ENCODE measurements at regions of chr18 and their contacts with region 1.

Region 1: DNA sequence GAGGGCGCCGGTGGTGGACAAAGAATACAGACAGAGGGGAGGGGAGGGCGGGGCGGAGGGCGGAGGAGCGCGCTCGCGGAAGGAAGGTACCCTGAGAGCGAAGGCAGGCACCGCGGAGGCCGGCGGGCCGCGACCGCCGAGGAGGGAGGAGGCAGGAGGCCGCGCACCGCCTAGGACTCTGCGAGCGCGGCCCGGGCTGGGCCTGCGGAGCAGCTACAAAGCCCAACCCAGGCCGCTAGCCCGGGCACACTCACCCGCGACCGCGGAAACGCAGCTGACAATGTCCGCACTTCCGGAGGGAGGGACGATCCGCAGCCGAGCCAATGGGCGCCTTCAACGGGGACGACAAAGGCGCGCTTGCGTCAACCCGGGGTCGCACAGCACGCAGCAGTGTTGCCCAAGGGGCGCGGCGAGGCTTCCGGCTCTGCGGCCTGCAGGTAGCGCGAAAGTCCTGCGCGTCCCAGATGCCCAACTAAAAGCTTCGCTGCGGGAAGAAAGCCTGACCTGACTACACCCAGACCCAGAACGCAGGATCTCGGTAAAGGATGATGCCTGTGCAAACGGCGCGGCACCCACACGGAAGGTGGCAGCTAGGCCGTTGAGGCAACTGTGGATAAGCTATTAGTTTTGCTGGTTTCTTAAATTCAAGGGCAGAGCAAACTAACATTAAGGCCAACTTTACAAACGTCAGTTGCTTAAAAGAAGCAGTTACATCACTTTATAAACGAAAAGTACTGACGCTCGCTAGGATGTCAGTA is at the start of gene C18orf32:
- DNase-seq: peak; percentile 94
- ATAC-seq: peak; percentile 92
- H3K4me3 Mint-ChIP-seq: peak within 1 kb of the TSS; percentile 94
- H3K27ac Mint-ChIP-seq: peak within 1 kb of the TSS; percentile 98
- H3K4me1 Mint-ChIP-seq: peaks cover 68% of the 10 kb centered on the region
- H3K27me3 Mint-ChIP-seq: no peaks in the 10 kb centered on the region
- CTCF ChIP-seq: no peak
- total RNA-seq, gene C18orf32: 31.6 and 32.9 TPM in 2 replicates

Region 2: GRCh38 chr18:49321800-49322461 is 165.2 kb before region 1 on chr18:
- CTCF ChIA-PET with region 1: no interaction called
- POLR2A ChIA-PET with region 1: no interaction called
- intact Hi-C with region 1: no loop called
- DNase-seq: no peak
- ATAC-seq: no peak
- H3K4me3 Mint-ChIP-seq: no peak overlapping the region
- H3K27ac Mint-ChIP-seq: no peak overlapping the region
- H3K4me1 Mint-ChIP-seq: no peaks in the 10 kb centered on the region
- H3K27me3 Mint-ChIP-seq: no peaks in the 10 kb centered on the region
- CTCF ChIP-seq: no peak

Region 3: DNA sequence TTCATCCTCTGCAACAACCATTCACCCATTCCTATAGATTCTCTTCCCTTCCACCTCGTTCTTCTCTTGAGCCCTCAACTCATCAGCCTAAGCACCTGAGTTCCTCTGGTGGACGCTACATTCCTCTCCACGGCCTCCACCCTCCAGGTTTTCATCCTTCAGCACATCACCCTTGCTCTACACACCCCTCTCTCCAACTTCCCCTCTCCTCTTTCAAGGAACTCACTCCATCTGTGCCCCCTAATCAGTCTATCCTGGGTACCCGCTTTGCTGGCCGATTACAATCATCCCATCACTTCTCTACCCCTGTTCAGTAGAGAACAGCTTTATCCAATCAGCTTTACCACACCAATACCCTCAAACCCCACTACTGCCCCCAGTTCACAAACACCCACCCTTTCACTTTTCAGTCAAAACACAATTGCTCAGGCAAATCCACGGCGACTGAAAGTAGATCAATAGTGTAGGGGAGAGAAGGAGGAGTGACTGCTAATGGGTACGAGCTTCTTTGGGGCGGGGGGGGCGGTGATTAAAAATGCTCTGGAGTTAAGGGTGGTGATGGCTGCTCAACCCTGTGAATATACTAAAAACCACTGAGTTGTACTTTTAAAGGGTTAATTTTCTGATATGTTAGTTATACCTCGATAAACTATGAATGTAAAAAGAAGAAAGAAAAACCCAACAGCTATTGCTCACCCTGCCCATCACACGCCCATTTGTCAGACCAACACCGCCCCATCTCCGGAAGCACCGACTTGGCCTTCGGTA is 27.5 kb before region 1 on chr18:
- CTCF ChIA-PET with region 1: no interaction called
- POLR2A ChIA-PET with region 1: interaction called, 68 read pairs
- intact Hi-C with region 1: loop called (anchors 1 kb)
- DNase-seq: no peak
- ATAC-seq: peak; percentile 23
- H3K4me3 Mint-ChIP-seq: peak overlapping the region; percentile 88
- H3K27ac Mint-ChIP-seq: peak overlapping the region; percentile 77
- H3K4me1 Mint-ChIP-seq: peaks cover 45% of the 10 kb centered on the region
- H3K27me3 Mint-ChIP-seq: no peaks in the 10 kb centered on the region
- CTCF ChIP-seq: no peak

Region 4: GRCh38 chr18:49520661-49521145 is 33.6 kb after region 1 on chr18:
- CTCF ChIA-PET with region 1: no interaction called
- POLR2A ChIA-PET with region 1: no interaction called
- intact Hi-C with region 1: no loop called
- DNase-seq: no peak
- ATAC-seq: no peak
- H3K4me3 Mint-ChIP-seq: no peak overlapping the region
- H3K27ac Mint-ChIP-seq: no peak overlapping the region
- H3K4me1 Mint-ChIP-seq: no peaks in the 10 kb centered on the region
- H3K27me3 Mint-ChIP-seq: peaks cover 15% of the 10 kb centered on the region
- CTCF ChIP-seq: no peak

Region 5: DNA sequence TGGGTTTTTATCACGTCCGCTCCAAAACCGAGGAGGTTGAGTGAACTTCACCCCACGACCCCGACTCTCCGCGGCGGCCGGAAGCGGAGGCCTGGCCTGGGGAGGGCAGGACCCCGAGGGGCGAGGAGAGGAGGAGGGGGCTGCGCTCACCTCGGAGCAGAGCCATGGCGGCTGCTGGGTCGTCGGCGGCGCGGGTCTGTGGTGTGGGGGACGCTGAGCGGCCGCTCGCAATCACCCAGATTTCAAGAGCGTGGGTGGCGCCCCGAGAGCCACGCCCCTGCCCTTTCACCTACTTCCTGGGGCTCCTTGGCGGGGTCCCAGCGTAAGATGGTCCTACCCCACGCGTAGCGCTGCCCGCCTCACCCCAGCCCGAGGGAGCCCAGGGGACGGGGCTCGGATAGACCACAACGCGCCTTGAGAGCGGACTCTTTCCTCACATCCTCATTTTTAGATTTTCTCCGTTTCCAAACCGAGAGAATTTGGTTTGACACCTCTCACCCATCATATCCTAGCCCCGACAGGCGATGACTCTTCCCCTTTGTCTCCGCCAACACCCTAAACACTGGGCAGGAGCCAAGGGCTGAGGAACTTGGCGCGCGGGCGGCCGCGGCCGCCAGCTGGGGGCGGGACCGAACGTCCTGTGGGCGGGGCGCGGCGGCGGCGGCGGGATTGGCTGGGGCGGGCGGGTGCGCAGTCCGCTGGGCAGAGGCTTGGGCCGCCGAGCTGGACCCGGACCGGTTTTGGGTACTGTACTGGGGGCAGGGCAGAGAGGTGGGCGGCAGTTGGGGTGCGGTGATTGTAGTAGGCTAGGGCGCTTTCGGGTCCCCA is 326.4 kb after region 1 on chr18 and contains the start of gene ACAA2:
- CTCF ChIA-PET with region 1: no interaction called
- POLR2A ChIA-PET with region 1: interaction called, 4 read pairs
- intact Hi-C with region 1: loop called (anchors 1 kb)
- DNase-seq: peak; percentile 79
- ATAC-seq: peak; percentile 88
- H3K4me3 Mint-ChIP-seq: peak within 1 kb of the TSS; percentile 96
- H3K27ac Mint-ChIP-seq: peak within 1 kb of the TSS; percentile 95
- H3K4me1 Mint-ChIP-seq: peaks cover 24% of the 10 kb centered on the region
- H3K27me3 Mint-ChIP-seq: no peaks in the 10 kb centered on the region
- CTCF ChIP-seq: no peak
- total RNA-seq, gene ACAA2: 24.9 and 26.9 TPM in 2 replicates

Region 6: DNA sequence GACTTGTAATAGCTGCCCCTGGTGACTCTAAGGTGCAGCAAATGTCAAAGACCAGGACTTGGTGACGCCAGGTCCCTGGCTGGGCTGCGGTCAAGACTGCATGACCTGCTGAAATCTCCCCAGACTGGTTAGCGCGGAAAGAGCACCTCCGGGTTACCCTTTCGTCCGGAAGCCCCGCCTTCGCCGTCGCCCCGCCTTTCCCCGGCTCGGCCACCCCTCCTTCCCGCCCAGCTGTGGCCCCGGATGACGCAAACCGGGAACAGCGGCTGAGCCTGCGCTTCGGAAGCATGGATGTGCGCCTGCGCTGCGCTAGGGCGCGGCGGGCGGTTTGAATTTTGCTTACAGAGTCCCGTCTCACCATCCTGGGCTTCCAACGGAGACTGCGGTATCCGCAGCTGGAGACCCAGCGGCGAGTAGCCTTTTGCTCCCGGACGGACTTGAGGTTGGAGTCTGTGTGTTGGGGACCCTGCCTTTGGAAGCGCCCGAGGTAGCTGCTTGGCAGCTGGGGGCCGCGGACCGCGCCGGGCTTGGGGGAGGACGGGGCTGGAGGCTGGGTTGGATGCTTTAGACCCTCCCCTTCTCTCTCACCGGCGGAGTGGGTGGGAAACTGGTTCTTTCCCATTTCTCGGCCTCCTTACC is 887.7 kb after region 1 on chr18 and contains the start of gene SKA1:
- CTCF ChIA-PET with region 1: no interaction called
- POLR2A ChIA-PET with region 1: no interaction called
- intact Hi-C with region 1: loop called (anchors 1 kb)
- DNase-seq: peak; percentile 85
- ATAC-seq: peak; percentile 100
- H3K4me3 Mint-ChIP-seq: peak within 1 kb of the TSS; percentile 83
- H3K27ac Mint-ChIP-seq: peak within 1 kb of the TSS; percentile 84
- H3K4me1 Mint-ChIP-seq: peaks cover 14% of the 10 kb centered on the region
- H3K27me3 Mint-ChIP-seq: peaks cover 6% of the 10 kb centered on the region
- CTCF ChIP-seq: no peak
- total RNA-seq, gene SKA1: 0.71 and 1.0 TPM in 2 replicates

Region 7: DNA sequence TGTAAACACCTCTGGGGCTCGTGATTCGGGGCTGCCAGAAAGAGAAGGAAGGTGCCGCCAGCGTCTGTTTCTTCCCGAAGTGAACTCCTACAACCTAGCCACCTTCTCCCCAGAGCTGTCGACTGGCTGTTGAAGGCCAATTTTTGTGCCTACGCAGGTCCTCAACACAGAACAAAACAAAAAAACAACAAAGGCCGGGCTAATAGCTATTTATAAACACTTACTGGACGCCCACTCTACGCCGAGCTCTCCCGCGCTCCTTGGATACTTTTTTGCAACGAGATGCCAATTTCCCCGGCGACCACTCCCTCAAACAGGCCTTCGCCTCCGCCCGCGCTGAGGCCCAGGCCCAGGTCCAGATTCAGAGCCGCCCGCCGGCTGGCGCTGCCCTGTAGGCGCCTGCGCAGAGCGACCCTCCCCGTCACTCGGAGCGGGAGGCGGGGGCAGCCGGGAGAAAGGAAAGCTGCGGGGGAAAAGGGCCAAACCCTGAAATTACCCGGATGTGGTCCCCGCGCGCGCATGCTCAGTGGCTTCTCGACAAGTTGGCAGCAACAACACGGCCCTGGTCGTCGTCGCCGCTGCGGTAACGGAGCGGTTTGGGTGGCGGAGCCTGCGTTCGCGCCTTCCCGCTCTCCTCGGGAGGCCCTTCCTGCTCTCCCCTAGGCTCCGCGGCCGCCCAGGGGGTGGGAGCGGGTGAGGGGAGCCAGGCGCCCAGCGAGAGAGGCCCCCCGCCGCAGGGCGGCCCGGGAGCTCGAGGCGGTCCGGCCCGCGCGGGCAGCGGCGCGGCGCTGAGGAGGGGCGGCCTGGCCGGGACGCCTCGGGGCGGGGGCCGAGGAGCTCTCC is 1542.8 kb after region 1 on chr18 and contains the start of gene SMAD4:
- CTCF ChIA-PET with region 1: no interaction called
- POLR2A ChIA-PET with region 1: no interaction called
- intact Hi-C with region 1: loop called (anchors 5 kb)
- DNase-seq: peak; percentile 98
- ATAC-seq: peak; percentile 85
- H3K4me3 Mint-ChIP-seq: peak within 1 kb of the TSS; percentile 96
- H3K27ac Mint-ChIP-seq: peak within 1 kb of the TSS; percentile 96
- H3K4me1 Mint-ChIP-seq: peaks cover 57% of the 10 kb centered on the region
- H3K27me3 Mint-ChIP-seq: no peaks in the 10 kb centered on the region
- CTCF ChIP-seq: no peak
- total RNA-seq, gene SMAD4: 83.8 and 94.9 TPM in 2 replicates